Activated CD8-positive, alpha-beta memory T cell treated with anti-CD3 and anti-CD28 coated beads, Interleukin-2, amount 10 ng/mL, durations not matched to agents 7 days and 5 days (primary cell): ENCODE measurements at regions of chr19 and their contacts with region 1.

Region 1: GRCh38 chr19:54035215-54036178 is 28.2 kb downstream of the VSTM1 start:
- DNase-seq: no peak
- ATAC-seq: no peak
- H3K4me3 Mint-ChIP-seq: no peak overlapping the region
- H3K27ac Mint-ChIP-seq: no peak overlapping the region
- H3K4me1 Mint-ChIP-seq: no peaks in the 10 kb centered on the region
- H3K27me3 Mint-ChIP-seq: peaks cover 7% of the 10 kb centered on the region

Region 2: GRCh38 chr19:53868892-53869804 is 166.3 kb before region 1 on chr19:
- CTCF ChIA-PET with region 1: no interaction called
- DNase-seq: peak; percentile 94
- ATAC-seq: peak; percentile 60
- H3K4me3 Mint-ChIP-seq: peak overlapping the region; percentile 97
- H3K27ac Mint-ChIP-seq: peak overlapping the region; percentile 83
- H3K4me1 Mint-ChIP-seq: peaks cover 51% of the 10 kb centered on the region
- H3K27me3 Mint-ChIP-seq: no peaks in the 10 kb centered on the region

Region 3: GRCh38 chr19:54011507-54012211 is 23.8 kb before region 1 on chr19:
- CTCF ChIA-PET with region 1: no interaction called
- DNase-seq: no peak
- ATAC-seq: no peak
- H3K4me3 Mint-ChIP-seq: no peak overlapping the region
- H3K27ac Mint-ChIP-seq: no peak overlapping the region
- H3K4me1 Mint-ChIP-seq: peaks cover 3% of the 10 kb centered on the region
- H3K27me3 Mint-ChIP-seq: peaks cover 2% of the 10 kb centered on the region

Region 4: GRCh38 chr19:54023191-54023590 is 12.3 kb before region 1 on chr19:
- CTCF ChIA-PET with region 1: interaction called, 23 read pairs
- DNase-seq: no peak
- ATAC-seq: no peak
- H3K4me3 Mint-ChIP-seq: no peak overlapping the region
- H3K27ac Mint-ChIP-seq: no peak overlapping the region
- H3K4me1 Mint-ChIP-seq: peaks cover 14% of the 10 kb centered on the region
- H3K27me3 Mint-ChIP-seq: peaks cover 18% of the 10 kb centered on the region